ENCODE measurements at regions of chr20 and their contacts with region 1.

Region 1: GRCh38 chr20:20780127-20780824 is 67.8 kb upstream of the RALGAPA2 start:
- DNase-seq: peak; percentile 91 to 96
- ATAC-seq: peak; percentile 89 to 96 (median 95)
- H3K4me3 ChIP-seq: peak overlapping the region; percentile 36
- H3K27ac ChIP-seq: peak overlapping the region; percentile 87
- H3K4me1 ChIP-seq: peaks cover 46% of the 10 kb centered on the region
- H3K27me3 ChIP-seq: no peaks in the 10 kb centered on the region
- CTCF ChIP-seq: no peak

Region 2: DNA sequence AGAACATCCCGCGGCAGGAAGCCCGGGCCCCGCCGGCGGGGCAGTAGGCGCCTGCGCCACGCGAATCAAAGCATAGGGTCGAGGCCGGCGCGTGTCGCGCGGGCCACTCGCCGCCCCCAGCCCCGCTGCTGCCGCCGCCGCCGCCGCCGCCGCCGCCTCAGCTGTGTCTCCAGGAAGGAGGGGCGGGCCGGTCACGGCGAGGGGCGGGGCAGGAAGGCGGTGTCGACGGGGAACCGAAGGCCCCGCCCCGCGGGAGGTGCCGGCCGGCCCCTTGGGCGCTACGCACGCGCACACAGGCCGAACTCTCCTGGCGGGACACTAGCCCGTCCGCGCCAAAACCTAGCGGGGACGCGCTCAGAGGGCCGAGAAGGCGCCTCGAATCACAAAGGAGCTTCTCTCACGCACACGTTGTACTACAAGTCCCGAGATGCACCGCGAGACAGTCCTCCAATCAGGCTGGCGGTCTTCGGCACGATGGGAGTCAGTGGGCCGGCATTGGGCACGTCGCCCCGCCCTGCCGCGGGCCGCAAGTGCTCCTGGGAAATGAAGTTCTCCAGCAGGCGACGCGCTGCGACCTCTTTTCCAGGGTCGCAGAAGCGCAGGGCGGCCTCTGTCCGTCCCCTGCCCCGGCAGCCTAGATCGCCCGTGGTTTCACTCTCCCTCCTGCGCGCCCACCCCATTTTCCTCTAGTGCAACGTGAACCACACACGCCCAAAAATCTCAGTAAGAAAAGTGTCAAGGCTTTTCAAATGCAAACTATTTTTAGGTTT is 67.6 kb before region 1 on chr20 and contains the start of gene RALGAPA2:
- intact Hi-C with region 1: loop called (anchors 5 kb)
- DNase-seq: peak; percentile 98 to 99
- ATAC-seq: peak; percentile 93 to 96 (median 94)
- H3K4me3 ChIP-seq: peak within 1 kb of the TSS; percentile 89
- H3K27ac ChIP-seq: peak within 1 kb of the TSS; percentile 91
- H3K4me1 ChIP-seq: peaks cover 40% of the 10 kb centered on the region
- H3K27me3 ChIP-seq: no peaks in the 10 kb centered on the region
- CTCF ChIP-seq: no peak
- total RNA-seq, gene RALGAPA2: 51.1 to 75.5 (median 71.4) TPM

Region 3: DNA sequence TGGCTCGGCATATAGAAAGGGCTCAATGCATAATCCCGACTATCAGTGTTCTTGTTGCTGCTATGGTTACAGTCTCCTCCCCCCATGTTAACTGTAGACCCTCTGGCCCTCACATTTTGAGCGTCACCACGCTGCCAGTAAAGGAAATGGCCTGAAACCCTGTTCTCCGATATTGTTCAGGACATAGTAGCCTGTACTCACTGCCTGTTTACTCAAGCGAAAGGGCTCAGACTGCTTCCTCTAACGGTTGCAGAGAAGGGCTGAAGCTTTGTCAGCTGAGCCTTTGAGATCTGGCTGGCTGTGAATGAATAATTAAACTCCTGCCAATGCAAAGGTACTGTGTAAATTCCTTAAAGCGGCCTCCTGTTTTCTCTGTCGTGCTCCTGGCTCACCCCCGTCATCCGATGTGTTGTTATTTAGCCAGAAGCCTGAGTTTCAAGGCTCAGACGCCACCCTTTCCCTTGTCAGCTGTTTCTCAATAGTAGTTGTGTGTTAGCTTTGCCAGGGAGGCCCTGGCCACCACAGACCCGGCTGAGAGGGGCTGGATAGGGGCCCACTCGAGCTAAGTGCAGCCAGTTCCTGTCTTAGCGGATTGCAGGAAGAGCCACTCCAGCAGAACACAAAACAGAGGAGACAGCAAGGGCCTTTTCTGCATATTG is 36.6 kb before region 1 on chr20:
- intact Hi-C with region 1: loop called (anchors 5 kb)
- DNase-seq: peak; percentile 78 to 92
- ATAC-seq: peak; percentile 78 to 93 (median 86)
- H3K4me3 ChIP-seq: peak overlapping the region; percentile 55
- H3K27ac ChIP-seq: peak overlapping the region; percentile 92
- H3K4me1 ChIP-seq: peaks cover 48% of the 10 kb centered on the region
- H3K27me3 ChIP-seq: no peaks in the 10 kb centered on the region
- CTCF ChIP-seq: no peak

Region 4: GRCh38 chr20:20814685-20815084 is 34.4 kb after region 1 on chr20:
- intact Hi-C with region 1: no loop called
- DNase-seq: no peak
- ATAC-seq: no peak
- H3K4me3 ChIP-seq: no peak overlapping the region
- H3K27ac ChIP-seq: no peak overlapping the region
- H3K4me1 ChIP-seq: no peaks in the 10 kb centered on the region
- H3K27me3 ChIP-seq: no peaks in the 10 kb centered on the region
- CTCF ChIP-seq: no peak

Measured in psoas muscle (tissue), 8 donors.